Panc1 (cell line): ENCODE measurements at regions of chr2 and their contacts with region 1.

Region 1: GRCh38 chr2:1769703-1770422 is 25.5 kb upstream of the PXDN start:
- DNase-seq: peak; percentile 71
- ATAC-seq: peak; percentile 96
- H3K4me3 ChIP-seq: no peak overlapping the region
- H3K27ac ChIP-seq: peak overlapping the region; percentile 82
- H3K4me1 ChIP-seq: peaks cover 20% of the 10 kb centered on the region
- H3K27me3 ChIP-seq: no peaks in the 10 kb centered on the region
- CTCF ChIP-seq: peak; percentile 94

Region 2: DNA sequence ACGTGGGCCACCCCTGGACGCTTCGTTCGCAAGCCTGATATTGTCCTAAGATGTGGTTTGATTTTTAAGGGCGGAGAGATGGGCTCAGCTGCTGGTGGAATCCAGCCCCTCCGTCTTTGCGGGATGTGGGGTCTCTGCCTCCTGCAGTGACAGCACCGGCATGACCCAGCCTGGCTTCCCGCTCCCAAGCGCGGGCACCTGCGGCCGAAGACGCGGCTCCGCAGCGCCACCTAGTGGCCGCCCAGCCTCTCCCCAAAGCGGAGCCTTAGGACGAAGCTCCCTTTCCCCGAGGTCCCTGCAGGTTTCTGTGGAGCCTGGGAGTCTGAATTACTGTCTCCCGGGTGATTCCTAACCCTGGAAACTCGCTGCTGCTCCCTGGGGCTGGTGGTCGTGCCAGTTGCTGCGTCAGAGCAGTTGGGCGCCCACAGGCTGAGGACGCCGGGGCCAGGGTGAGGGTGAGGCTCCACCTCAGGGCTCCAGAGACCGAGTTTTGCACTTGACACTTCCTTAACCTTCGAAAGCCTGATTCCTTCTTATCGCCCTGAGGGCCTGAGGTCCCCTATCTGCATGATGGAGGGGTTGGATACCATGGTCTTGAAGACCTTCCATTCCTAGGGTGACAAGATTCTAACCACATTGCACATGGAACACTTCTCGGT is 219.1 kb before region 1 on chr2:
- CTCF ChIA-PET with region 1: interaction called, 3 read pairs
- POLR2A ChIA-PET with region 1: no interaction called
- in situ Hi-C with region 1: no loop called
- intact Hi-C with region 1: loop called (anchors 2 kb)
- DNase-seq: no peak
- ATAC-seq: peak; percentile 87
- H3K4me3 ChIP-seq: no peak overlapping the region
- H3K27ac ChIP-seq: peak overlapping the region; percentile 83
- H3K4me1 ChIP-seq: peaks cover 27% of the 10 kb centered on the region
- H3K27me3 ChIP-seq: no peaks in the 10 kb centered on the region
- CTCF ChIP-seq: peak; percentile 99

Region 3: GRCh38 chr2:1591978-1592907 is 177.6 kb before region 1 on chr2:
- CTCF ChIA-PET with region 1: interaction called, 3 read pairs
- POLR2A ChIA-PET with region 1: no interaction called
- in situ Hi-C with region 1: no loop called
- intact Hi-C with region 1: loop called (anchors 2 kb)
- DNase-seq: no peak
- ATAC-seq: 0 out of 2 replicates have a peak, but pooled peaks have one; percentile 19
- H3K4me3 ChIP-seq: no peak overlapping the region
- H3K27ac ChIP-seq: peak overlapping the region; percentile 94
- H3K4me1 ChIP-seq: peaks cover 43% of the 10 kb centered on the region
- H3K27me3 ChIP-seq: no peaks in the 10 kb centered on the region
- CTCF ChIP-seq: peak; percentile 76

Region 4: DNA sequence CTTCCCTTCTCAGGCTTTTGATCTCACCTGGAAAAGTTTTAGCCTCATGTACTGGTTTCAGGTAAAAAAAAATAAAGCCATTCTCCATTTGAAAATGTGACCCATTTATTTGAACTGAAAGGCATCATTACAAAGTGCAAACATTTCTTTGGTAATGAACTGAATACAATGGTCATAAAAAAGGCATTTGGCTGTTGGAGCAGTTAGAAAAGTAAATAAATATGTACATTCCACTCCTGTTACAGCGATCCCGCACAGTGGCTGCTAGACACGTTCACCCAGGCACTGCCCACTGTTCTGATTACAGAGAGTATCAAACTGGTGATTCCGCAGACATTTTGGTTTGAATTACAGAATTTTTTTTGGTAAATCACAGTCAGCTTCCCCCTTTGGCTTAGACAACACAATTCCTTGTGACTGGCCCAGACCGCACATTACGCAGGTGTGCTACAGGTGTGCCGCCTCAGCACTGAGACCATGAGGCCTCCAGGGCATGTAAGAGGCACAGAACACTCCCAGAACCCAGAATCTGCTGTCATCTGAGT is 138.0 kb before region 1 on chr2:
- CTCF ChIA-PET with region 1: no interaction called
- POLR2A ChIA-PET with region 1: no interaction called
- in situ Hi-C with region 1: no loop called
- intact Hi-C with region 1: loop called (anchors 10 kb)
- DNase-seq: peak; percentile 61
- ATAC-seq: peak; percentile 94
- H3K4me3 ChIP-seq: no peak overlapping the region
- H3K27ac ChIP-seq: peak overlapping the region; percentile 99
- H3K4me1 ChIP-seq: peaks cover 53% of the 10 kb centered on the region
- H3K27me3 ChIP-seq: no peaks in the 10 kb centered on the region
- CTCF ChIP-seq: no peak

Region 5: DNA sequence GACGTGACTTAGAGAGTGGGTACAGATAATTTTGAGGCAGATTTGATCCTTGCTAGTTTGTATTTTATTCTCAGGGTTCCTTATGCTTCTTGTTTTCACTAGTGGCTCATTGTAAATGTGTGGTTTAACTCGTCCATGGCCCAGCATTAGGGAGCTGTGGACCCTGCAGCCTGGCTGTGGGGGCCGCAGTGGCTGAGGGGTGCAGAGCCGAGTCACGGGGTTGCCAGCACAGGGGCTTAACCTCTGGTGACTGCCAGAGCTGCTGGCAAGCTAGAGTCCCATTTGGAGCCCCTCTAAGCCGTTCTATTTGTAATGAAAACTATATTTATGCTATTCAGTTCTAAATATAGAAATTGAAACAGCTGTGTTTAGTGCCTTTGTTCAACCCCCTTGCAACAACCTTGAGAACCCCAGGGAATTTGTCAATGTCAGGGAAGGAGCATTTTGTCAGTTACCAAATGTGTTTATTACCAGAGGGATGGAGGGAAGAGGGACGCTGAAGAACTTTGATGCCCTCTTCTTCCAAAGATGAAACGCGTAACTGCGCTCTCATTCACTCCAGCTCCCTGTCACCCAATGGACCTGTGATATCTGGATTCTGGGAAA is 291.3 kb after region 1 on chr2:
- CTCF ChIA-PET with region 1: interaction called, 13 read pairs
- POLR2A ChIA-PET with region 1: no interaction called
- in situ Hi-C with region 1: no loop called
- intact Hi-C with region 1: no loop called
- DNase-seq: no peak
- ATAC-seq: no peak
- H3K4me3 ChIP-seq: no peak overlapping the region
- H3K27ac ChIP-seq: no peak overlapping the region
- H3K4me1 ChIP-seq: no peaks in the 10 kb centered on the region
- H3K27me3 ChIP-seq: no peaks in the 10 kb centered on the region
- CTCF ChIP-seq: no peak